ENCODE measurements at regions of chr11 and their contacts with region 1.

Region 1: GRCh38 chr11:62671575-62672389 is at the starts of genes LBHD1 and UQCC3:
- DNase-seq: peak; percentile 84
- ATAC-seq: peak; percentile 87
- H3K4me3 Mint-ChIP-seq: peak within 1 kb of the TSS; percentile 94
- H3K27ac Mint-ChIP-seq: peak within 1 kb of the TSS; percentile 91
- H3K4me1 Mint-ChIP-seq: peaks cover 35% of the 10 kb centered on the region
- H3K27me3 Mint-ChIP-seq: no peaks in the 10 kb centered on the region
- total RNA-seq, gene LBHD1: 23.5 to 23.6 TPM
- total RNA-seq, gene UQCC3: 6.7 to 6.8 TPM

Region 2: GRCh38 chr11:62567018-62567633 is 104.7 kb before region 1 on chr11:
- POLR2A ChIA-PET with region 1: no interaction called
- DNase-seq: no peak
- ATAC-seq: no peak
- H3K4me3 Mint-ChIP-seq: no peak overlapping the region
- H3K27ac Mint-ChIP-seq: peak overlapping the region; percentile 74
- H3K4me1 Mint-ChIP-seq: peaks cover 36% of the 10 kb centered on the region
- H3K27me3 Mint-ChIP-seq: no peaks in the 10 kb centered on the region

Region 3: GRCh38 chr11:62601394-62602140 is 70.2 kb before region 1 on chr11 and contains the start of gene MTA2:
- POLR2A ChIA-PET with region 1: interaction called, 20 read pairs
- DNase-seq: peak; percentile 99
- ATAC-seq: peak; percentile 89
- H3K4me3 Mint-ChIP-seq: peak within 1 kb of the TSS; percentile 87
- H3K27ac Mint-ChIP-seq: peak within 1 kb of the TSS; percentile 88
- H3K4me1 Mint-ChIP-seq: peaks cover 34% of the 10 kb centered on the region
- H3K27me3 Mint-ChIP-seq: no peaks in the 10 kb centered on the region
- total RNA-seq, gene MTA2: 231 to 233 TPM

Region 4: GRCh38 chr11:62621567-62622470 is 50.0 kb before region 1 on chr11 and contains the start of gene B3GAT3:
- POLR2A ChIA-PET with region 1: interaction called, 19 read pairs
- DNase-seq: peak; percentile 94
- ATAC-seq: peak; percentile 87
- H3K4me3 Mint-ChIP-seq: peak within 1 kb of the TSS; percentile 93
- H3K27ac Mint-ChIP-seq: peak within 1 kb of the TSS; percentile 99
- H3K4me1 Mint-ChIP-seq: peaks cover 24% of the 10 kb centered on the region
- H3K27me3 Mint-ChIP-seq: no peaks in the 10 kb centered on the region
- total RNA-seq, gene B3GAT3: 76.1 to 87.0 TPM

Region 5: GRCh38 chr11:62652161-62653006 is 19.4 kb before region 1 on chr11:
- POLR2A ChIA-PET with region 1: interaction called, 187 read pairs
- DNase-seq: no peak
- ATAC-seq: no peak
- H3K4me3 Mint-ChIP-seq: peak overlapping the region; percentile 94
- H3K27ac Mint-ChIP-seq: peak overlapping the region; percentile 91
- H3K4me1 Mint-ChIP-seq: peaks cover 17% of the 10 kb centered on the region
- H3K27me3 Mint-ChIP-seq: no peaks in the 10 kb centered on the region

Region 6: GRCh38 chr11:62705880-62706849 is 34.4 kb after region 1 on chr11:
- POLR2A ChIA-PET with region 1: interaction called, 22 read pairs
- DNase-seq: peak; percentile 95
- ATAC-seq: peak; percentile 43
- H3K4me3 Mint-ChIP-seq: peak overlapping the region; percentile 91
- H3K27ac Mint-ChIP-seq: peak overlapping the region; percentile 73
- H3K4me1 Mint-ChIP-seq: peaks cover 39% of the 10 kb centered on the region
- H3K27me3 Mint-ChIP-seq: no peaks in the 10 kb centered on the region

Region 7: DNA sequence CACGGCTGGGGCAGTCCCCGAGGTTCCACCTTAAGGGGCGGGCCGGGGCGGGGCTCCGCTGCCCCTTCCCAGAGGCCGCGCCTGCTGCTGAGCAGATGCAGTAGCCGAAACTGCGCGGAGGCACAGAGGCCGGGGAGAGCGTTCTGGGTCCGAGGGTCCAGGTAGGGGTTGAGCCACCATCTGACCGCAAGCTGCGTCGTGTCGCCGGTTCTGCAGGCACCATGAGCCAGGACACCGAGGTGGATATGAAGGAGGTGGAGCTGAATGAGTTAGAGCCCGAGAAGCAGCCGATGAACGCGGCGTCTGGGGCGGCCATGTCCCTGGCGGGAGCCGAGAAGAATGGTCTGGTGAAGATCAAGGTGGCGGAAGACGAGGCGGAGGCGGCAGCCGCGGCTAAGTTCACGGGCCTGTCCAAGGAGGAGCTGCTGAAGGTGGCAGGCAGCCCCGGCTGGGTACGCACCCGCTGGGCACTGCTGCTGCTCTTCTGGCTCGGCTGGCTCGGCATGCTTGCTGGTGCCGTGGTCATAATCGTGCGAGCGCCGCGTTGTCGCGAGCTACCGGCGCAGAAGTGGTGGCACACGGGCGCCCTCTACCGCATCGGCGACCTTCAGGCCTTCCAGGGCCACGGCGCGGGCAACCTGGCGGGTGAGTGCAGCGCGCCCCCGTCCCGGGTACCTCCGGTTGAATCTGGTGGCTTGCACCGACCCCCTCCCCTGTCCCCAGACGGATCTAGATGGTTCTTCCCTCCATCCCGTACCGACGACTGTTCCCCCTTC is 209.2 kb after region 1 on chr11 and contains the start of gene SLC3A2:
- POLR2A ChIA-PET with region 1: interaction called, 16 read pairs
- DNase-seq: peak; percentile 93
- ATAC-seq: peak; percentile 83
- H3K4me3 Mint-ChIP-seq: peak within 1 kb of the TSS; percentile 100
- H3K27ac Mint-ChIP-seq: peak within 1 kb of the TSS; percentile 100
- H3K4me1 Mint-ChIP-seq: peaks cover 40% of the 10 kb centered on the region
- H3K27me3 Mint-ChIP-seq: no peaks in the 10 kb centered on the region
- total RNA-seq, gene SLC3A2: 222 to 228 TPM